Ascending aorta (tissue), 2 donors: ENCODE measurements at regions of chr10 and their contacts with region 1.

Region 1: DNA sequence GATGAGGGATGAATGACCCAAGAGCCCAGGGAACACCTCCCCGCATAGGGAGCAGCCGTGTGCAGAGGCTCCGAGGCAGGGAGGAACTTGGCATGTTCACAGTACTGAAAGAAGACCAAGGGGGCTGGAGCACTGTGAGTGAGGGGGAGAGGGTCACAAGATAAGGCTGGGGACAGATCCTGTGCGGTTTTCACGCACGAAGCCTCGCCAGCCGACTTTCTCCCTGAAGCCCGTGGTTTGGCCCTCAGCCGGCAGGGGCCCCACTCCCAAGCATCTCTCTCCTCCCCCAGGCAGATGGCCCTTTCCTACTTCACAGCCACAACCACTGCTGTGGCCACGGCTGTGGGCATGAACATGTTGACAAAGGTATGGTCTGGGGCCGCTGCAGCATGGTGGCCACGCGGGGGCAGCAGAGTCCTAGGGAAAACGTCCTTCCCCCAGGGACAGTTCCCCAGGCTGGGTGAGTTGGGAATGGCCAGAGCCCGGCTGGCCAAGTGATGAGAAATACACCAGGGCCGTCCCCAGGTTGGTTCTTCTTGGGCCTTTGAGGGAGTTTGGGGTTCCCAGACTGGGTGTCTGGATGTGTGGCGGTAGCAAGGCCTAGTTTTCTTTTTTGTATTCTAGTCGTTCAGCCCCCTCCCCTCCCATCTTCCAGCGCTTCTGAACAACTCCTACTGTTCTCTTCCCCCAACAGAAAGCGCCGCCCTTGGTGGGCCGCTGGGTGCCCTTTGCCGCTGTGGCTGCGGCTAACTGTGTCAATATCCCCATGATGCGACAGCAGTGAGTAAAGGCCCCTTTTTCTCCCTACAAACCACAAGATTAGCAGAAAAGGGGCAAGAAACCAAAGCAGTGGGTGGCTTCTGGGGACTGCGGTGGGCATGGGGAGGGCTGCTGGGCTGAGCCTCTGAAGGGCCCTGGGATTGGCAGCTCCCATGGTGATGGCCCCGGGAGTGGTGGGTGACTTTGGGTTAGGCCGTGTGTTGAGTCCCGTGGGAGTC is 14.4 kb upstream of the WBP1L start:
- DNase-seq: peak; percentile 48 to 93
- H3K4me3 ChIP-seq: no peak overlapping the region
- H3K27ac ChIP-seq: no peak overlapping the region
- H3K4me1 ChIP-seq: peaks cover 0 to 7% of the 10 kb centered on the region in 2 donors
- H3K27me3 ChIP-seq: no peaks in the 10 kb centered on the region
- CTCF ChIP-seq: peak; percentile 92 to 94 (median 92)

Region 2: DNA sequence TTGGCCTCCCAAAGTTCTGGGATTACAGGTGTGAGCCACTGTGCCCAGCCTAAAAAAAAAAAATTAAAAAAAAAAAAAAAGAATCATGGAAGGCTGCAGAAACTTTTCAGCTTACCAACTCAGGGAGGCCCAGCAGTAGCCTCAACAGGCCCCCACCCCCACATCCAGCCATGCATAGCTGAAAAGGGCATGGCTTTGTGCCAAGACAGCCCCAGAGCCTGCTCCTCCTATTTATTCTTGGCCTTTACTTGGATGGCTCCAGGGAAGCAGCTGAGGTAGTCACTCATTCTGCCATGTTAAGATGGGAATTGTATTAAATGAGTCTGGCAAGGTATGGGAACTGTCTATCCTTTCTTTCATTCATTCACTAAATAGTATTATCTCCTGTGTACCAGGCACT is 175.0 kb after region 1 on chr10:
- intact Hi-C with region 1: loop called (anchors 1 kb)
- DNase-seq: no peak
- H3K4me3 ChIP-seq: no peak overlapping the region
- H3K27ac ChIP-seq: no peak overlapping the region
- H3K4me1 ChIP-seq: no peaks in the 10 kb centered on the region
- H3K27me3 ChIP-seq: no peaks in the 10 kb centered on the region
- CTCF ChIP-seq: no peak